ENCODE measurements at regions of chr3 and their contacts with region 1.

Region 1: DNA sequence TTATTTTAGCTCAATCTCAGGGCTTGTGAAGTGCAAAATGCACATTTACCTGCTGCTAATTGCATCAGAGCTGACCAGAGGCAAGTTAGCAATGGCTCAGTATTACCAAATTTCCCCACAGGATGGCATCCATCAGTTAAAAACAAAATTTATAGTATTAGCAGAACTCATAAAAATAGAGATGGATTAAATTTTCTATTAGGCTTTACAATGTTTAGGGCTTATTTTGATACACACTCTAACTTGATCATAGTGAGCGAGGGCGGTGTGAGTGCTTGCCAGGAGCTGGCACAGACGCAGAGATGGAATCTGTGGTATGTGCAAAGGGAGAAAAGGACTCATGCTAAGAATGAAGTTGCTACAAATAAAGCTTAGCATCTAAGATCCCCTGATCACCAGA is 241.0 kb downstream of the NSUN3 start:
- DNase-seq: no peak
- H3K4me3 ChIP-seq: no peak overlapping the region
- H3K27ac ChIP-seq: no peak overlapping the region
- H3K4me1 ChIP-seq: peaks cover 0 to 8% (median 4%) of the 10 kb centered on the region in 4 experiments; a peak in 3 of 7 replicates
- H3K27me3 ChIP-seq: no peaks in the 10 kb centered on the region
- CTCF ChIP-seq: peak in 1 of 3 experiments; percentile 7; a peak in 1 of 4 replicates
- EP300 ChIP-seq: no peak
- POLR2A ChIP-seq: no peak
- RAD21 ChIP-seq: peak; percentile 15 to 28; a peak in 1 of 4 replicates

Region 2: GRCh38 chr3:94234177-94234788 is 69.6 kb before region 1 on chr3:
- CTCF ChIA-PET with region 1: interaction called, 12 read pairs
- POLR2A ChIA-PET with region 1: no interaction called
- DNase-seq: no peak
- H3K4me3 ChIP-seq: no peak overlapping the region
- H3K27ac ChIP-seq: no peak overlapping the region
- H3K4me1 ChIP-seq: no peaks in the 10 kb centered on the region
- H3K27me3 ChIP-seq: no peaks in the 10 kb centered on the region
- CTCF ChIP-seq: peak in 2 of 3 experiments; percentile 42 to 74; a peak in 3 of 4 replicates
- EP300 ChIP-seq: no peak
- POLR2A ChIP-seq: no peak
- RAD21 ChIP-seq: peak; percentile 73

Region 3: GRCh38 chr3:94317017-94317416 is 13.1 kb after region 1 on chr3:
- CTCF ChIA-PET with region 1: interaction called, 11 read pairs
- POLR2A ChIA-PET with region 1: no interaction called
- DNase-seq: no peak
- H3K4me3 ChIP-seq: no peak overlapping the region
- H3K27ac ChIP-seq: no peak overlapping the region
- H3K4me1 ChIP-seq: no peaks in the 10 kb centered on the region
- H3K27me3 ChIP-seq: no peaks in the 10 kb centered on the region
- CTCF ChIP-seq: no peak
- EP300 ChIP-seq: no peak
- POLR2A ChIP-seq: no peak
- RAD21 ChIP-seq: no peak